HepG2 (cell line): ENCODE measurements at regions of chr4 and their contacts with region 1.

Region 1: DNA sequence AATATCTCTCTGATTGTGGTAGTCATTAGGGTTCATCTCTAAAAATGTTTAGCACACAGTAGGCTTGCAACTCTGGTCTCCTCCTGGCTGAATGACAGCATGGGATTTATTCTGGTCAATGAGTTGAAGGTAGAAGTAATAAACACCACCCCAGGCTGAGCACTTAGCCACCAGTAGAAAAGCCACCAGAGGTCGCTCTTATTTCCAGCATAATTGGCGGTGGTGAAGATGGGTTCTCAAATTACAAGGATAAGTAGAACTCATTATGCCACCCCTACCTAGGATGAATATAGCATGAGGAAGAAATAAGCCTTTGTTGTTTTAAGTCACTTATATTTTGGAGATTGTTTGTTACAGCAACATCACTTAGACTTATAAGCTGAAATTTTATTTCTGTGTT is 302.7 kb downstream of the GPM6A start:
- DNase-seq: peak; percentile 12
- ATAC-seq: peak; percentile 68
- H3K4me3 ChIP-seq: no peak overlapping the region
- H3K27ac ChIP-seq: no peak overlapping the region
- H3K4me1 ChIP-seq: no peaks in the 10 kb centered on the region
- H3K27me3 ChIP-seq: no peaks in the 10 kb centered on the region
- CTCF ChIP-seq: peak; percentile 28; the same call in 1 of the 2 replicates
- EP300 ChIP-seq: no peak
- POLR2A ChIP-seq: no peak
- RAD21 ChIP-seq: no peak

Region 2: DNA sequence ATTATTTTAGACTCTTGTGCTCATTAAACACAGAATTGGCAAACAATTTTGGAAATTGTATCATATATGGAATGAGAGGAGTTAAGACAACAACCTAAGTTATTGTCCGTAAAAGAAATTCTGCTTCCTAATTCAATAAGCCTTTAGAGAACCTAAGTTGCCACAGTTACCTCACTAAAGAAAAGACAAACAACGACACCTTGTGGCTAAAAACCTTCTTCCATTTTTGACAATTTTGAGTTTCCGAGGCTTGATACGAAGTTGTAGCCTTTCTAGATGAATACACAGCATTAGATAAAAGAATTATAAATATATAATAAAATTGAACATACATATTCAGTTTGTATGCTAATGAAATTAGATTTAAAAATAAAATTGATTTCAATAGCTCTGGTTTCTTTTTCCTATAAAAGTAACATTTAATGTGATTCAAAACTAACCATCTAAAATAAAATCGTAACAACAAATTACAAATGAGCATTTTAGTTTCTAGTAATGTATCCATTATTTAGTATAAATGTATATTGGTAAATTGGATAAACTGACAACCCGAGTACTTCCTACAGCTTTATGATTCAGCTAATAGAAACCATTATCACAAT is 27.6 kb after region 1 on chr4:
- CTCF ChIA-PET with region 1: interaction called, 6 read pairs
- POLR2A ChIA-PET with region 1: no interaction called
- in situ Hi-C with region 1: no loop called
- intact Hi-C with region 1: loop called (anchors 1 kb)
- DNase-seq: peak; percentile 35
- ATAC-seq: no peak; the same call in 2 of the 3 replicates
- H3K4me3 ChIP-seq: no peak overlapping the region
- H3K27ac ChIP-seq: no peak overlapping the region
- H3K4me1 ChIP-seq: peaks cover 9% of the 10 kb centered on the region
- H3K27me3 ChIP-seq: no peaks in the 10 kb centered on the region
- CTCF ChIP-seq: peak; percentile 59
- EP300 ChIP-seq: no peak
- POLR2A ChIP-seq: no peak
- RAD21 ChIP-seq: no peak; the same call in 1 of the 2 replicates

Region 3: DNA sequence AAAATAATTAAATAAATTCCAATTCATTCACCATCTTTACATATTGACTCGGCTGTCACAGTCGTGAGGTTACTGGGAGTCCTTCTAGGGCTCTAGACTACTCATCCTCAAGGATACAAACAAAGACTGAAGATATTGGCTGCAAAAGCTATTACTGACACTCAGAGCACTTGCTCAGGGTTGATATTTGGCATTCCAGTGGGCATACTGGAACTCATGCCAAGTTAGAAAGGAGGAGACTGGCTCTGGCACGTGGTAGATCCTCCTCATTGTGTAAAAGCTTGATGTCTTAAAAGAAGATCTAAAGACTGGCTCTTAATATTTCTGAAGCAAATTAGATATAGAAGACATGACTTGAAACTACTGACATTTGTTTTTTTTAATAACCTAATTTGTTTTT is 130.0 kb after region 1 on chr4:
- CTCF ChIA-PET with region 1: no interaction called
- POLR2A ChIA-PET with region 1: no interaction called
- in situ Hi-C with region 1: no loop called
- intact Hi-C with region 1: no loop called
- DNase-seq: no peak
- ATAC-seq: no peak
- H3K4me3 ChIP-seq: no peak overlapping the region
- H3K27ac ChIP-seq: no peak overlapping the region
- H3K4me1 ChIP-seq: no peaks in the 10 kb centered on the region
- H3K27me3 ChIP-seq: no peaks in the 10 kb centered on the region
- CTCF ChIP-seq: no peak
- EP300 ChIP-seq: no peak
- POLR2A ChIP-seq: no peak
- RAD21 ChIP-seq: no peak

Region 4: DNA sequence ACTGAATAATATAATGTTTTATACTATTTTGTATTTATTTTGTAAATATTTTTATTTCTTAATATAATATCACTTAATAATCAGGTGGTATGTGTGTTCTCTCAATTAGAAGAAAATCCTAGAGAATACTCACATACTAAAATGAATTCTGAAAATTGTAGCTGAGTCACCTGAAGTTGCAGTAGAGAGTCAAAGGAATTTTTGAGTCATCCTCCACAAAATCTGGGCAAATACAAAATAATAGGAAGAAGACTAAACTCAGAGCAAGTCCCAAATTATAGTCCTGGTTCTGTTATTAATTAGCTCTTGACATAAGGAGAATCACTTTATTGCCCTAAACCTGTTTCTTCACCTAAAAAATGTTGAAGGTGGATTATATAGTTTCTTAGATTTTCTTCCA is 628.3 kb after region 1 on chr4:
- CTCF ChIA-PET with region 1: no interaction called
- POLR2A ChIA-PET with region 1: no interaction called
- in situ Hi-C with region 1: no loop called
- intact Hi-C with region 1: no loop called
- DNase-seq: no peak
- ATAC-seq: no peak
- H3K4me3 ChIP-seq: no peak overlapping the region
- H3K27ac ChIP-seq: no peak overlapping the region
- H3K4me1 ChIP-seq: no peaks in the 10 kb centered on the region
- H3K27me3 ChIP-seq: no peaks in the 10 kb centered on the region
- CTCF ChIP-seq: no peak
- EP300 ChIP-seq: no peak
- POLR2A ChIP-seq: no peak
- RAD21 ChIP-seq: no peak